Endothelial cell of umbilical vein (primary cell): ENCODE measurements at regions of chr3 and their contacts with region 1.

Region 1: GRCh38 chr3:54649551-54649950 is 278.3 kb downstream of the LRTM1 start:
- DNase-seq: no peak
- H3K4me3 ChIP-seq: no peak overlapping the region
- H3K27ac ChIP-seq: no peak overlapping the region
- H3K4me1 ChIP-seq: no peaks in the 10 kb centered on the region
- H3K27me3 ChIP-seq: no peaks in the 10 kb centered on the region
- CTCF ChIP-seq: no peak
- POLR2A ChIP-seq: no peak

Region 2: GRCh38 chr3:54691289-54691771 is 41.8 kb after region 1 on chr3:
- CTCF ChIA-PET with region 1: no interaction called
- POLR2A ChIA-PET with region 1: no interaction called
- dilution Hi-C with region 1: no loop called
- intact Hi-C with region 1: loop called (anchors 2 kb)
- DNase-seq: no peak
- H3K4me3 ChIP-seq: no peak overlapping the region
- H3K27ac ChIP-seq: no peak overlapping the region
- H3K4me1 ChIP-seq: no peaks in the 10 kb centered on the region
- H3K27me3 ChIP-seq: no peaks in the 10 kb centered on the region
- CTCF ChIP-seq: no peak
- POLR2A ChIP-seq: no peak